Thyroid gland (tissue), 4 donors: ENCODE measurements at regions of chr16 and their contacts with region 1.

Region 1: DNA sequence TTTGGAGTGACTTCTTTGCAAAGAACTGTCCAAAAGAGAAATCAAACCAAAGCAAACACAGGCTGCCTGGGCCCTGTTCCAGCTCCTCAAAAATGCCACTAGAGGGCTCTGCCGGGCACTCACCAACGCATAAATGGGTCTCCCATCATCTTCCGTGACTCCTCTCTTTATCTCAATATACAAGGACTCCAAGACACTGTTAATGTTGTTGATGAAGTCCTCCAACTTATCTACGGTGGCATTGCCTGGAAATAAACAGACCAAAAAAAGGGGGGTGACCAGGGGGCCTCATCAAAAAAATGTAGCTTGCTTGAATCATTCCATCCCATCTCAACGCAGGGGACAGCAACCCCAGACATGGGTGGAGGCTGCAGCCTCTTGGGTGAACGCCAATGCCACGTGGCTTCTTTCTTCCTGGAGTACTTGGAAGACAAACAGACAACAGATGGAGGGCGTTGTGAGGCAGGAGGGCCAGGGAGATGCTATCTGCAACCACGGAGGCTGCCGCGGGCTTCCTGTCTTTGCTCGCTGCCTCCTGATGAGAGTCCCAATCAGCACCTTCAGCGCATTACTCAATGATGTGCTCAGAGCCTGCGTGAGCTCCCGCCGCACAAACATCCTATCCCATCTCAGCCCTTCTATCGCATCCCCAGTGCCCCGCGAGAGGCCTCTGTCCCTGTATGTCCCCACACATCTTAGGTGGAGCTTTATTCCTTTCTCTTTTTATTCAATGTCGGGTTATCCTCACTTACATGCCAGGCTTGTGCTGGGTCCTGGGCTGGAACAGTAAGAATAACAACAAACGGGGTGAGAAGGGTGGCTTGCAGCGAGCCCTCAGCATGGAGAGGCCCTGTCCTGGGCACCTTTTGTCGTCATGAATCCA is 32.0 kb downstream of the KDM8 start:
- DNase-seq: peak; percentile 72 to 76
- H3K4me3 ChIP-seq: no peak overlapping the region
- H3K27ac ChIP-seq: peak overlapping the region in 2 of 3 donors; percentile 57 to 71
- H3K4me1 ChIP-seq: peaks cover 7 to 30% of the 10 kb centered on the region in 2 donors
- H3K27me3 ChIP-seq: no peaks in the 10 kb centered on the region
- CTCF ChIP-seq: peak; percentile 55 to 87 (median 68)
- POLR2A ChIP-seq: no peak

Region 2: GRCh38 chr16:27179500-27180072 is 55.7 kb before region 1 on chr16:
- intact Hi-C with region 1: loop called (anchors 5 kb)
- DNase-seq: peak; percentile 53 to 62
- H3K4me3 ChIP-seq: no peak overlapping the region
- H3K27ac ChIP-seq: no peak overlapping the region
- H3K4me1 ChIP-seq: no peaks in the 10 kb centered on the region
- H3K27me3 ChIP-seq: no peaks in the 10 kb centered on the region
- CTCF ChIP-seq: peak; percentile 50 to 69 (median 58)
- POLR2A ChIP-seq: no peak

Region 3: GRCh38 chr16:27367461-27368357 is 132.4 kb after region 1 on chr16:
- intact Hi-C with region 1: loop called (anchors 5 kb)
- DNase-seq: peak; percentile 69 to 71
- H3K4me3 ChIP-seq: no peak overlapping the region
- H3K27ac ChIP-seq: peak overlapping the region in 1 of 3 donors; percentile 52
- H3K4me1 ChIP-seq: peaks cover 3 to 7% of the 10 kb centered on the region in 2 donors
- H3K27me3 ChIP-seq: no peaks in the 10 kb centered on the region
- CTCF ChIP-seq: peak in 5 of 6 experiments; percentile 50 to 85 (median 71)
- POLR2A ChIP-seq: no peak

Region 4: DNA sequence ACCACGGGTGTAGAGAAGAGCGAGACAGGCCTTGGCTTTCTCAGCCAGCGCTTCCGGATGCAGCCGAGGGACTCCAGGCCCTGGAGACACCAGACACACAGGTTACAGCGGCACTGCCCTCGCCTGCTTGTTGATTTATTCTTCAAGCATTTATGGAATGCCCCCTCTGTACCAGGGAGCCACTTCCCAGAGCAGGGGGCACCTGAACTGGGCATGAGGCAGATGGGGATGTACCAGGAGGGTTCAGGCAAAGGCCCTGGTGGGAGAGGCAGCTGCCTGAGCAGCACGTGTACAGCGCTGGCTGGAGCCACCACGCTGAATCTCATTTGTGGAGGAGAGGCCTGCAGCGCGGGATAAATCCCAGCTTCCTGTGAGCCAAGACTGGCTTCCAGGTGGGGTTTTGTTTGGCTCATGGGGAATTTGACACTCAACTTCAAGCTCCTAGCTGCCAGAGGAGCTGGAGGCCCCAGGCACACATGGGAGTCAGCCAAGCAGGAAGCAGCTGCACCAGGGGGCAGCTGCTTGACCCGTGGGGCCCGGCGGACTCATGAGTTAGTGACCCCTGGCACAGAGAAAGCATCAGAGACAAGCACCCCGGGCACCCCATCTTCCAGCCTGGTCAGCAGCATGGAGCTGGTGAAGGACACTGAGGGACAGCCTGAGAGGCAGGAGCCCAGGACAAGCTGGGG is 226.3 kb after region 1 on chr16:
- intact Hi-C with region 1: loop called (anchors 5 kb)
- DNase-seq: no peak
- H3K4me3 ChIP-seq: no peak overlapping the region
- H3K27ac ChIP-seq: peak overlapping the region in 1 of 3 donors; percentile 28
- H3K4me1 ChIP-seq: peaks cover 0 to 7% of the 10 kb centered on the region in 2 donors
- H3K27me3 ChIP-seq: no peaks in the 10 kb centered on the region
- CTCF ChIP-seq: no peak
- POLR2A ChIP-seq: no peak

Region 5: DNA sequence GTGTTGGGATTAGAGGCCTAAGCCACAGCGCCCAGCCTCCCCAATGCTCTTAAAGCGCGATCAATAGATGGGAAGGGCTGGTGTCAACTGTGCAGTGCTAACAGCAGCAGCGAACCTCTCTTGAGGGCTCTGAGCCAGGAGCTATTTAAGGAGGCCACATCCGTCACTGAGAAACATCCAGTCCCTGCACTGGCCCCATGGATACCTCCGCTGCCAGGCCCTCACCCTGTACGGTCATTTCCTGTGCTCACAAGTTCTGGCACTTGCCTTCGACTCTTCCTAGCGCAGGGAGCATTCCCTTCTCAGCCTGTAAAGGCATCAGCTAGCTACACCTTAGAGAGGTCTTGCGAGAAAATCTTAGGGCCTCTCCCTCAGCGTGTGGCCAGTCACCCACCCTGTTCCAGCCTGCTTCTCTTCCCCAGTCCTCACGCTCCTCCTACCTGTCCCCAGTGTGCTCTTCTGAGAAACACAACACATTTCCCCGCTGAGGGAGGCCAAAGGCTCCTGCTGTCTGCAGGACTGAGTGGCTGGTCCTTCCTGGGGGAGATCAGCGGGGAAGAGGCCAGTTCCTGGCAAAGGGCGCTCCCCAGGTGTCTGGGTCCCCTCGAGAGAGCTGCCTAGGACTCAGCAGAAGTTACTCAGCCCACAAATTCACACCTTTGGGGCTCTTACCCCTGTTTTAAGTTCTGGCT is 285.8 kb after region 1 on chr16:
- intact Hi-C with region 1: no loop called
- DNase-seq: peak in 1 of 2 donors; percentile 15
- H3K4me3 ChIP-seq: no peak overlapping the region
- H3K27ac ChIP-seq: peak overlapping the region; percentile 57 to 80 (median 64)
- H3K4me1 ChIP-seq: peaks cover 0 to 9% of the 10 kb centered on the region in 2 donors
- H3K27me3 ChIP-seq: no peaks in the 10 kb centered on the region
- CTCF ChIP-seq: no peak
- POLR2A ChIP-seq: peak in 1 of 2 donors; percentile 17